H1 (cell line): ENCODE measurements at regions of chr4 and their contacts with region 1.

Region 1: DNA sequence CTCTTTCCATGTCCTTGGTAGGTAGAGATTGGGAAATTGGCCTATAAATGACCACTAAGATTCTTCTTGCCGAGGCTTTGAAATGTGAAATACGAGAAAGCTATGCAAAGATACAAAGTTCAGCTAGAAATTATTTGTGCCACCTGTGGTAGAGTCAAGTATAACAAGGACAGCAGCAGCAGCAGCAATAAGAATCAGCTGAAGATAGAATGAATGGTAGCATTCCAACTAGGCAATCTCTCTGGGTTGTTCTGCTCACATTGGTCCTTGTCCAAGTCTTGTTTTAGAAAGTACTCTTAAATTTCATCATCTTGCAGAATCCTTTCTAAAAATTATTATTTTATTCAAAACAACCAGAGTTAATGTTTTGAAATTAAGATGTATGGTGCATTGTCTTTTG is 67.8 kb upstream of the PCDH10 start:
- DNase-seq: no peak
- H3K4me3 ChIP-seq: no peak overlapping the region
- H3K27ac ChIP-seq: no peak overlapping the region
- H3K4me1 ChIP-seq: no peaks in the 10 kb centered on the region
- H3K27me3 ChIP-seq: peaks cover 0 to 1% (median 0%) of the 10 kb centered on the region in 4 experiments; a peak in 1 of 7 replicates
- CTCF ChIP-seq: peak in 1 of 3 experiments; percentile 20; a peak in 1 of 4 replicates
- EP300 ChIP-seq: no peak
- POLR2A ChIP-seq: no peak
- RAD21 ChIP-seq: 0 out of 4 replicates have a peak, but pooled peaks of 1 of the 2 experiments have one; percentile 13

Region 2: GRCh38 chr4:133068083-133068482 is 13.2 kb before region 1 on chr4:
- CTCF ChIA-PET with region 1: interaction called, 10 read pairs
- POLR2A ChIA-PET with region 1: no interaction called
- DNase-seq: no peak
- H3K4me3 ChIP-seq: no peak overlapping the region
- H3K27ac ChIP-seq: no peak overlapping the region
- H3K4me1 ChIP-seq: no peaks in the 10 kb centered on the region
- H3K27me3 ChIP-seq: no peaks in the 10 kb centered on the region
- CTCF ChIP-seq: no peak
- EP300 ChIP-seq: no peak
- POLR2A ChIP-seq: no peak
- RAD21 ChIP-seq: no peak

Region 3: GRCh38 chr4:133102043-133102442 is 20.8 kb after region 1 on chr4:
- CTCF ChIA-PET with region 1: no interaction called
- POLR2A ChIA-PET with region 1: no interaction called
- DNase-seq: no peak
- H3K4me3 ChIP-seq: no peak overlapping the region
- H3K27ac ChIP-seq: no peak overlapping the region
- H3K4me1 ChIP-seq: peaks cover 0 to 9% (median 0%) of the 10 kb centered on the region in 4 experiments; a peak in 2 of 7 replicates
- H3K27me3 ChIP-seq: no peaks in the 10 kb centered on the region
- CTCF ChIP-seq: no peak
- EP300 ChIP-seq: no peak
- POLR2A ChIP-seq: no peak
- RAD21 ChIP-seq: no peak

Region 4: DNA sequence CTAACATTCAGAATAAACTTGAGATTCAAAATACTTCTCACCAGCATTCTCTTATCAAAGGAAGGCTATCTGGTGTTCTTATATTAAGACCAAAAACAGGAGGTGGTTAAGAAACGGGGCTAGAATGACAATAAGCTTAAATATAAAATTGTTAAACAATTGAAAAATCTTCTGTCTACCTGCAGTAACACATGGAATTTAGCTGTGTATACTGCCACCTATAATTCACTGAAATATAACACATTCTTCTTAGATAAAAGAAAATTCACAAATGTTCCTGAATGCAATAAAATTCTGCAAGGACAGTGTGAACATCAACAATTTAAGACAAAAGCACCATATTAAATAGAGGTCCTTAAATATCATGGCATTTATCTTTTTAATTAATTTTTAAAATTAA is 56.3 kb after region 1 on chr4:
- CTCF ChIA-PET with region 1: no interaction called
- POLR2A ChIA-PET with region 1: no interaction called
- DNase-seq: no peak
- H3K4me3 ChIP-seq: no peak overlapping the region
- H3K27ac ChIP-seq: no peak overlapping the region
- H3K4me1 ChIP-seq: 0 out of 7 replicates have a peak, but pooled peaks cover 0 to under 1% (median 0%) of the 10 kb centered on the region in 4 experiments
- H3K27me3 ChIP-seq: no peaks in the 10 kb centered on the region
- CTCF ChIP-seq: no peak
- EP300 ChIP-seq: no peak
- POLR2A ChIP-seq: no peak
- RAD21 ChIP-seq: no peak